ENCODE measurements at regions of chr12 and their contacts with region 1.

Region 1: GRCh38 chr12:123232807-123233543 is at the starts of genes MPHOSPH9 and MTRFR:
- DNase-seq: peak; percentile 98 to 100
- ATAC-seq: peak; percentile 99
- H3K4me3 ChIP-seq: peak within 1 kb of the TSS; percentile 79 to 97 (median 87)
- H3K27ac ChIP-seq: peak within 1 kb of the TSS; percentile 66 to 96 (median 90)
- H3K4me1 ChIP-seq: peaks cover 2 to 56% (median 34%) of the 10 kb centered on the region in 9 donors
- H3K27me3 ChIP-seq: no peaks in the 10 kb centered on the region
- CTCF ChIP-seq: no peak
- total RNA-seq, gene MPHOSPH9: 19.7 to 33.6 (median 27.1) TPM
- total RNA-seq, gene MTRFR: 9.5 to 12.1 (median 10.8) TPM

Region 2: GRCh38 chr12:122860346-122861090 is 372.5 kb before region 1 on chr12:
- intact Hi-C with region 1: loop called in 6 of 10 experiments (anchors 5 to 10 kb)
- DNase-seq: peak; percentile 87 to 90
- ATAC-seq: peak; percentile 59 to 87 (median 77)
- H3K4me3 ChIP-seq: no peak overlapping the region
- H3K27ac ChIP-seq: peak overlapping the region in 8 of 10 donors; percentile 45 to 76 (median 54)
- H3K4me1 ChIP-seq: peaks cover 3 to 54% (median 45%) of the 10 kb centered on the region in 9 donors
- H3K27me3 ChIP-seq: no peaks in the 10 kb centered on the region
- CTCF ChIP-seq: peak; percentile 84 to 95 (median 88)

Region 3: DNA sequence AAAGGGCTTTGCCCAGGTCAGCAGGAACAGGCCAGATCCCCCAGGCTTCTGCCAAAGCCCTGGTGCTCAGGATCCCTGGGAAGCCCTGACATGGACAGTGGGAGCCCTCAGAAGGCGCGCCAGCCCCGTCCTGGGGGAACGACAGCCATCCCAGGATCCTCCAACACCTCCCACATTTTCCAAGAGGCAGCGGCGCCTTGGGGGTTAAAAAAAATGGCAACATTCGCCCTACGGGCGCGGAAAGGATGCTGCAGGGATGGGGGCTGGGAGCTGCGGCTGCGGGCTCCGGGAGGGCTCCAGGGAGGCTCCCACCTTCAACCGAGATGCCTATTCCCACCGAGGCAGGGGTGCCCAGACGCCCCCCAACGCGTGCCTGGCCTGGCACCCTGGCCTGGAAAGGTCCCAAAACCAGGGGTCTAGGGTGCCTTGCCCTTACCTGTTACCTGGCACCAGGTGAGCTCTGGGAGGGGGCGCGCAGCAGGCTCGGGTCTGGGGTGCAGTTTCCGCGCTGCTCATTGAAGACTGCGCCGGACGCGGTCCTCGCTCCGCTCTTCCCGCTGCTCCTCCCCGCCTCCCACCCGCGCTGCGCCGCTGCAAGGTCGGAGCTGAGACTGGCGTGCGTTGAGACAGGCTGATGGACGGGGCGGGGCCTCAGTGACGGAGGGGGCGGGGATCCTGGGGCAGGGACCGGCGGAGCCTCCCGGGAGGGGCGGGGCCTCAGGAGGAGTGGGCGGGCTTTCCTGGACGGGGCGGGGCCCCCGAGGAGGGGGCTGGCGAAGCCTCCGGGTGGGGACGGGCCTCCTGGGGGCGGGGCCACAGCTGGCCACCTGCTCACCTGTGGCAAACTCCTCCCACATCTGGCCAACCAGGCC is 266.9 kb before region 1 on chr12 and contains the start of gene ABCB9:
- intact Hi-C with region 1: loop called in 2 of 10 experiments (anchors 5 kb)
- DNase-seq: peak; percentile 94 to 95
- ATAC-seq: peak; percentile 87 to 98 (median 93)
- H3K4me3 ChIP-seq: peak within 1 kb of the TSS; percentile 42 to 94 (median 66)
- H3K27ac ChIP-seq: peak within 1 kb of the TSS in 9 of 10 donors; percentile 24 to 75 (median 62)
- H3K4me1 ChIP-seq: peaks cover 11 to 57% (median 38%) of the 10 kb centered on the region in 9 donors
- H3K27me3 ChIP-seq: no peaks in the 10 kb centered on the region
- CTCF ChIP-seq: no peak
- total RNA-seq, gene ABCB9: 2.7 to 5.8 (median 4.5) TPM

Region 4: DNA sequence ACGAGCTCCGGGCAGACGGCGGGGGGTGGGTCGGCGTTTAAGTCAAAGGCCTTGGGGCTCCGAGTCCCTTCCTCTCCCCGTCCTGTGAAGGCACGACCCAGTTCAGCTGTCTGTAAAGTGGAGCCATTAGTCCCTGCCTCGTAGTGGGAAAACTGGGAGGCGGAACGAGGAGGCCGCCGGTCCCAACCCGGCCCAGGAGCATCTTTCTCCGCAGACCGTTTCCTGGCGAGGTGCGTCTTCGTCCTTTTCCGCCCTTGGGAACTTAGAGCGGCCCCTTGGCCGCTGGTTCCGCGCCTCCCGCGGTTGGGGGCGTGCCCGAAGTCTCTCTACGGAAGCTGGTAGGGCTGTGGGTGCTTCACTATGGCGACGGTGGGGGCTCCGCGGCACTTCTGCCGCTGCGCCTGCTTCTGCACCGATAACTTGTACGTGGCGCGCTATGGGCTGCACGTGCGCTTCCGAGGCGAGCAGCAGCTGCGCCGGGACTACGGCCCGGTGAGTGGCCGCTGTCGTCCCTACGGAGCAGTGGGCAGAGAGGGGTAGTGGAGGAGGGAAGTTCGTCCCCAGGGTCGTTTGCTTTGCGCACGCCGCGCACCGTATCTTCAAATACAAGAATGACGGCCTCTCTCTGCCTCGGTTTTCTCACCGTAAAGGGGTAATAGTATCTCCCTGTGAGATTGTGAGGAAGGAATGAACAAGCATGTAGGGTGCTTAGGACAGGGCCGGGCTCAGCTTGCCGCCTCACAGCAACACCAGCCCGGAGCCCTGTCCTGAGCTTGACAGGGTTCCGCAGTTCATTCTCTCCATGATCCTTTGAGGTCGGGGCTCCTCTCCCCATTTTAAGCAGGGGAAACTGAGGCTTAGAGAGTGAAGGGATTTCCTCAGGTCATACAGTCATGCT is 257.8 kb before region 1 on chr12 and contains the start of gene OGFOD2:
- intact Hi-C with region 1: loop called in 8 of 10 experiments (anchors 2 to 5 kb)
- DNase-seq: peak; percentile 91 to 93
- ATAC-seq: peak; percentile 91 to 98 (median 94)
- H3K4me3 ChIP-seq: peak within 1 kb of the TSS; percentile 59 to 99 (median 85)
- H3K27ac ChIP-seq: peak within 1 kb of the TSS; percentile 93 to 100 (median 98)
- H3K4me1 ChIP-seq: peaks cover 12 to 50% (median 36%) of the 10 kb centered on the region in 9 donors
- H3K27me3 ChIP-seq: no peaks in the 10 kb centered on the region
- CTCF ChIP-seq: peak in 1 of 9 donors; percentile 14
- total RNA-seq, gene OGFOD2: 10.6 to 17.1 (median 12.0) TPM

Region 5: DNA sequence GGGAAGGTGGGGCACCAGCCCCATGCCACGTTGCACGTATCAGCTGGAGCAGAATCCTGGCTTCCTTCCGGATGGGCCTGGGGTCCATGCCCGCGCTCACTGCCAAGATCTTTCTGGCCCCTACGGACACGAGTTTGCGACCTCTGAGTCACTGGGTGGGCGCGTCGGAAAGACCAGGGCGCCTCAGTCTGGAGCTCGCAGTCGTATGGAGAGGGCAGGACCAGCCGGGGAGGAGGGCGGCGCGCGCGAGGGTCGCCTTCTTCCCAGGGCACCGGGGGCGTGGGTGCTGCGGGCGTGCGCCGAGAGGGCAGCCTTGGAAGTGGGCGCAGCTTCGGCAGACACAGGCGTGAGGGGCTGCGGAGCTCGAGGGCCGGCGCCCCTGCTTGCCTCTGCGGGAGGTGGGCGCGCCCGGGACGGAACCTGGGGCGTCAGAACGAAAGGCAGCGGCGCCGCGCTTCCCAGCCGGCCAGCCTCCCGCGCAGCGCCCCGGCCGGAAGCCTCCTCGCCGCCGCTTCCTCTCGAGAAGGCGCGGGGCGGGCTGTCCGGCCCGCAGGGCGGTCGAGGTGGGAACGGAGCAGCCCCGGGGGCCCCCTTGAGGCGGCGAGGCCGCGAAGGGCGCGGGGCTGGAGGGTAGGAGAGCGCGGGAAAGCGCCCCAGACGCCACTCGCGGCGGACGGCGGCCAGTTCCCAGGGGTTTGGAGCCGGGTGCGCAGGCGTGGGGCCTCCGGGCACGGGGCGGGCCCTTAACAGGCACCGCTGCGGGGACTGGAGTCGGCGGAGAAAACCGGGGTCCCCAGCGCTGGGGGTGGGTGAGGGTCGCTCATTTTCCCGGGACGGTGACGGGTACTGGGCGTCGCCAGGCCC is 252.6 kb before region 1 on chr12 and contains the start of gene ARL6IP4:
- intact Hi-C with region 1: loop called in 8 of 10 experiments (anchors 2 to 5 kb)
- DNase-seq: peak; percentile 53 to 72
- ATAC-seq: peak; percentile 64 to 86 (median 74)
- H3K4me3 ChIP-seq: peak within 1 kb of the TSS; percentile 76 to 100 (median 92)
- H3K27ac ChIP-seq: peak within 1 kb of the TSS; percentile 82 to 98 (median 92)
- H3K4me1 ChIP-seq: peaks cover 36 to 87% (median 72%) of the 10 kb centered on the region in 9 donors
- H3K27me3 ChIP-seq: no peaks in the 10 kb centered on the region
- CTCF ChIP-seq: peak in 1 of 9 donors; percentile 26
- total RNA-seq, gene ARL6IP4: 125 to 161 (median 137) TPM

Region 6: GRCh38 chr12:123043536-123044001 is 189.4 kb before region 1 on chr12:
- intact Hi-C with region 1: loop called in 9 of 10 experiments (anchors 2 to 10 kb)
- DNase-seq: peak; percentile 82 to 85
- ATAC-seq: peak; percentile 84 to 96 (median 91)
- H3K4me3 ChIP-seq: no peak overlapping the region
- H3K27ac ChIP-seq: peak overlapping the region in 7 of 10 donors; percentile 4 to 51 (median 39)
- H3K4me1 ChIP-seq: peaks cover 14 to 61% (median 42%) of the 10 kb centered on the region in 9 donors
- H3K27me3 ChIP-seq: no peaks in the 10 kb centered on the region
- CTCF ChIP-seq: peak; percentile 52 to 88 (median 72)

Region 7: GRCh38 chr12:124786061-124786964 is 1553.3 kb after region 1 on chr12:
- intact Hi-C with region 1: no loop called
- DNase-seq: peak; percentile 78 to 89
- ATAC-seq: peak; percentile 94 to 97 (median 96)
- H3K4me3 ChIP-seq: peak overlapping the region in 9 of 10 donors; percentile 20 to 54 (median 49)
- H3K27ac ChIP-seq: peak overlapping the region in 1 of 10 donors; percentile 4
- H3K4me1 ChIP-seq: peaks cover 0 to 4% (median 0%) of the 10 kb centered on the region in 9 donors
- H3K27me3 ChIP-seq: no peaks in the 10 kb centered on the region
- CTCF ChIP-seq: no peak

Measured in heart right ventricle (tissue), 16 donors.